GM12878 (cell line): ENCODE measurements at regions of chr3 and their contacts with region 1.

Region 1: DNA sequence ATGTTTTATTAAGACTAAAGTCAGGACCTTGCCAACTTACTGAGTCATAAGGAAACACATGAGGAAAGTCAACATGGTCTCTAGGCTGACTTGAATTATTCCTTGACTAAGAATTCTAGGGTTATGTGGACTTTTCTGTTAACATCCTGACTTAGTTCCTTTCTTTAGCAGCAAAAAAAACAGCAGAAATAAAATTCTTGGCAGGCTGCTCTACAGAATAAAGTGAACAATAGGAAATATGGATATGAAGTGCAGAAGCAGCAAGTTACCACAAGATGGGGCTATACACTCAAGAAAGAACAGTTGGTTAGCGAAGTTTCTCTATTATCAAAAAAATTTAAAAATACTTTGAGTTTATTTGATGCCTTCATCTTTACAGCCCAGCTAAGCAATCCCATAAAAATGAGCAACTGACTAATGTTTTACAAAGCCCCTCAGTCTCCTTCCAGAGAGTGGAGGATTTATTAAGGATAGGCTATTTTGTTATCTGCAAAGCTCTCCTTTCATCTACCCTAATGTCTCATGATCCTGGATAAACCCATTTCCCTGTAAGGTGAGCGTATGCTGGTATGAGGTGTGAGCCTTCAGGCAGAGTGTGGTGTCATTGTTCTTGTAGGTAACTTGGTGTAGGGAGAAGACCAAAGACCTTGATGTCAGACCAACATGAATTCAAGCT is 23.1 kb upstream of the MCCC1 start:
- DNase-seq: no peak
- ATAC-seq: peak; percentile 68
- H3K4me3 ChIP-seq: no peak overlapping the region
- H3K27ac ChIP-seq: no peak overlapping the region
- H3K4me1 ChIP-seq: no peaks in the 10 kb centered on the region
- H3K27me3 ChIP-seq: no peaks in the 10 kb centered on the region
- CTCF ChIP-seq: peak; percentile 61 to 75 (median 73)
- EP300 ChIP-seq: no peak
- POLR2A ChIP-seq: no peak
- RAD21 ChIP-seq: peak; percentile 93

Region 2: DNA sequence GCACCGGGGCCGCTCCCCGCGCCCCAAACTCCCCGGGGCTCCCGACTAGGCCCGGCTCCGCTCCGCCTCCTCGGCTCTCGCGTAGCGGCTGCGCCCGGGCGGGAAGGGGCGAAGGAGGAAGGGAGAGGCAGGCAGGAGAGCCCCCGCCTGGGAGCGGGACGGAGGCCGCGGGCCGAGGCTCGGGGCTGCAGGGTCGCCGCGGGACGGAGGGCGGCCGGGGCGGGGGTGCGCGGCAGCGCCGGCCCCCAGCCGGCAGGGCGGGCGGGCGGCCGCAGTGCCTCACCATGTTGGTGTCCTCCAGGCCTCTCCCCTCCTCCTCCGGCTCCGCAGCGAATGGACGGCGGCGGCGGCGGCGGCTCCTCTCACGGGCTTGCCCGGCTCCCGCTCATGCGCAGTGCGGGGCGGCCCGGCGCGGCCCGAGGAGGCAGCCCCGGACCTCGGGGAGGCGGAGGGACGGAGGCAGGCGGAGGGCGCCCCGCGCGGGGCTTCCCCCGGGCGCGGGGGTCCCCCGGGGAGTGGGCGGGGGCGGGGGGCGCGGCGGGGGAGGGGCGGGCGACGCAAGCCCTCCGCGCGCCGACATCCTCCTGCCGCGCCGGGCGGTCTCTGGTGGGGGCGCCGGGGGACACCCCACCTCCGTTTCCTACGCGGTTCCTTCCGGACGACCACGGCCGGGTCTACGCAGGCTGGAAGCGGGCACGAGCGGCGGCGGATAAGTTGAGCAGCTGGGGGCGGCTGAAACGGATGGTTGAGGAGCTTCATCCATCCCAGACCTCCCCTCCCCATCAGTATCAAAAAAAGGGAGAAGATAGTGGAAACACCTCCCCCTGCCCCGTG is 142.0 kb before region 1 on chr3 and contains the start of gene DCUN1D1:
- CTCF ChIA-PET with region 1: no interaction called
- POLR2A ChIA-PET with region 1: no interaction called
- RAD21 ChIA-PET with region 1: no interaction called
- SMC1A ChIA-PET with region 1: no interaction called
- in situ Hi-C with region 1: no loop called
- intact Hi-C with region 1: no loop called
- DNase-seq: peak; percentile 19
- ATAC-seq: peak; percentile 91
- H3K4me3 ChIP-seq: peak within 1 kb of the TSS; percentile 85
- H3K27ac ChIP-seq: peak within 1 kb of the TSS; percentile 53
- H3K4me1 ChIP-seq: peaks cover 9% of the 10 kb centered on the region
- H3K27me3 ChIP-seq: no peaks in the 10 kb centered on the region
- CTCF ChIP-seq: no peak
- EP300 ChIP-seq: no peak
- POLR2A ChIP-seq: peak; percentile 84
- RAD21 ChIP-seq: no peak
- polyA plus RNA-seq, gene DCUN1D1: 19.8 to 47.4 TPM

Region 3: DNA sequence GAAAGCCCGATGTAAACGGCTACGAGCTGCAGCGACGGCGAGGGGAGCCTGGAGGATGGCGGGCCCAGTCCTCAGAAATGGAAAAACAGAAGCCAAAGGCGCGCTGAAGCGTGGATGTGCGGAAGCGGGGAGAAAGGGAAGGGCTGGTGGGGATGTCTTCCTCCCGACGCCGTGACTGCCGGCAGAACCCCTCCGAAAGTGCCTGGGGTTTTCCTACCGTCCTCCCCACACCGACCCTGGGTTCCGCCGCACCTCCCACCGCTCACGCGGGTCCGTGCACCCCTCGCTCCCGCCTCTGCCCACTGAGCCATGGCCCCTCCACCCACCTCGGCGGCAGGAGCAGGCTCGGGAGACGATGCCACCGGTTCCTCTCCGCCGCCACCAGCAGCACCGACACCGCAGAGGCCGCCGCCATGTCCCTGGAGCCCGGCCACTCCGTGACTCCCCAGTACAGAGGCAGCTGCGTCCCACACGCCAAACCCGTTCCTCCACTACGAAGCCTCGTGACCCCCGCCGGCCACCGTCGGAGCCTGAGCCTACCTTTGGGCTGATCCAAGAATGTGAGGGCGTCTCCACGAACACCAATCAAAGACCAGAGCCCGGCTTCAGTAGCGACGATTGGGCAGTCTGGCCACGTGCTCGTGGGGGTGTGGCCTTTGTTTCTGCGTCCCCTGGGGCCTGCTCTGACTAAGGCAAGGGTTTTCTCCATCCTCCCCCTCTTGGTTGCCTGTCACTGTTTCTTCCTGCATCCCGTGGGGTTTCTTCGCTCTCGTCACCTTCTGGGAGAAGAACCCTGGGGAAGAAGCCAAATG is 23.2 kb before region 1 on chr3 and contains the start of gene MCCC1:
- CTCF ChIA-PET with region 1: interaction called, 6 read pairs
- POLR2A ChIA-PET with region 1: no interaction called
- RAD21 ChIA-PET with region 1: interaction called, 9 read pairs
- SMC1A ChIA-PET with region 1: interaction called, 10 read pairs
- in situ Hi-C with region 1: no loop called
- intact Hi-C with region 1: no loop called
- DNase-seq: peak; percentile 94
- ATAC-seq: peak; percentile 98
- H3K4me3 ChIP-seq: peak within 1 kb of the TSS; percentile 93
- H3K27ac ChIP-seq: peak within 1 kb of the TSS; percentile 92
- H3K4me1 ChIP-seq: peaks cover 4% of the 10 kb centered on the region
- H3K27me3 ChIP-seq: no peaks in the 10 kb centered on the region
- CTCF ChIP-seq: no peak; a peak in 1 of 6 replicates
- EP300 ChIP-seq: peak in 1 of 2 experiments; percentile 44; a peak in 1 of 4 replicates
- POLR2A ChIP-seq: peak; percentile 94
- RAD21 ChIP-seq: no peak
- polyA plus RNA-seq, gene MCCC1: 35.0 to 38.7 TPM

Region 4: DNA sequence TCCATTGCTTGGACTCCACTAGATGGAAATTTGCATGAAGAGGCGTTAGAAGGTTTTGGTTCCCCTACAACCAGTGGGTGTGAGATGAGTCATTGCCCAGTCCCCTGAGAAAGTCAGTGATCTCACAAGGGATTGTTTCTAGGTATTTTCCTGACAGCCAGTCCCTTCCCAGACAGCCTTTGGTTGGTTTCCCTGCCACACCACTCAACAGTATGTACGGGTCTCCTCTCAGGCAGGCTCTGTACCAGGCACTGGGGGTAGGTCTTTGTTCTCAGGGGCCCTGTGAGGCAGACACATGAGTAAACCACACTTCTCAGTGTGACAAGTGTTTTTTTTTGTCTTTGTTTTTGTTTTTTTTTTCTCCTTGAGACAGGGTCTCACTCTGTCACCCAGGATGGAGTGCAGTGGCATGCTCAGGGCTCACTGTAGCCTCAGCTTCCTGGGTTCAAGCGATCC is 36.2 kb after region 1 on chr3:
- CTCF ChIA-PET with region 1: interaction called, 35 read pairs
- POLR2A ChIA-PET with region 1: no interaction called
- RAD21 ChIA-PET with region 1: interaction called, 30 read pairs
- SMC1A ChIA-PET with region 1: interaction called, 16 read pairs
- in situ Hi-C with region 1: no loop called
- intact Hi-C with region 1: loop called (anchors 1 kb)
- DNase-seq: peak; percentile 97
- ATAC-seq: peak; percentile 71
- H3K4me3 ChIP-seq: peak overlapping the region; percentile 84
- H3K27ac ChIP-seq: peak overlapping the region; percentile 91
- H3K4me1 ChIP-seq: peaks cover 43% of the 10 kb centered on the region
- H3K27me3 ChIP-seq: no peaks in the 10 kb centered on the region
- CTCF ChIP-seq: no peak
- EP300 ChIP-seq: peak; percentile 90 to 91
- POLR2A ChIP-seq: no peak; the same call in 1 of the 2 replicates
- RAD21 ChIP-seq: no peak

Region 5: GRCh38 chr3:183285828-183286457 is 163.5 kb after region 1 on chr3:
- CTCF ChIA-PET with region 1: interaction called, 11 read pairs
- POLR2A ChIA-PET with region 1: no interaction called
- RAD21 ChIA-PET with region 1: interaction called, 3 read pairs
- SMC1A ChIA-PET with region 1: no interaction called
- in situ Hi-C with region 1: no loop called
- intact Hi-C with region 1: no loop called
- DNase-seq: peak; percentile 81
- ATAC-seq: peak; percentile 95
- H3K4me3 ChIP-seq: no peak overlapping the region
- H3K27ac ChIP-seq: peak overlapping the region; percentile 2; the same call in 1 of the 2 replicates
- H3K4me1 ChIP-seq: peaks cover 5% of the 10 kb centered on the region
- H3K27me3 ChIP-seq: no peaks in the 10 kb centered on the region
- CTCF ChIP-seq: no peak
- EP300 ChIP-seq: peak; percentile 66 to 76; a peak in 3 of 4 replicates
- POLR2A ChIP-seq: no peak
- RAD21 ChIP-seq: no peak

Region 6: DNA sequence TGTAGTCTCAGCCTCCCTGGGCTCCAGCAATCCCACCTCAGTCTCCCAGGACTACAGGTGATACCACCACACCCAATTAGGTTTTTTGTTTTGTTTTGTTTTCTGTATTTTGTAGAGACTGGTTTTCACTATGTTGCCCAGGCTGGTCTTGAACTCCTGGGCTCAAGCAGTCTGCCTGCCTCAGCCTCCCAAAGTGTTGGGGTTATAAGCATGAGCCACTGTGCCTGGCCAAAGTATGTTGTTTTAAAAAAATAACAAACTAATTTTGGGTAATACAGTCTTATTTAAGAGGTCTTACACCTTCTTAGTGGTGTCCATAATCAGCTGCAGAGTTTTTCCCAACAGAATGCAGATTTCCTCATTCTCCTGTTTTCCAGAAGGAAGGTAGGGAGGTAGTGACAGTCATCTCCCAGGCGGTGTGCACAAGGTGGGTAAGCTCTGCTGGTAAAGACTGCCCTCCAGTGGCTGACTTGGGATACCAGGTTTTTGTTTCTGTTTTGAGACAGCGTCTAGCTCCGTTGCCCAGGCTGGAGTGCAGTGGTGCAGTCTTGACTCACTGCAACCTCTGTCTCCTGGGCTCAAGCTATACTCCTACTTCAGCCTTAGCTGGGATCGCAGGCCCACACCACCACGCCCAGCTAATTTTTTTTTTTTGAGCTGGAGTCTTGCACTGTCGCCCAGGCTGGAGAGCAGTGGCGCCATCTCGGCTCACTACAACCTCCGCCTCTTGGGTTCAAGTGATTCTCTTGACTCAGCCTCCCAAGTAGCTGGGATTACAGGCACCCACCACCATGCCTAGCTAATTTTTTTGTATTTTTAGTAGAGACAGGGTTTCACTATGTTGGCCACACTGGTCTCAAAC is 644.6 kb after region 1 on chr3:
- CTCF ChIA-PET with region 1: no interaction called
- POLR2A ChIA-PET with region 1: no interaction called
- RAD21 ChIA-PET with region 1: no interaction called
- SMC1A ChIA-PET with region 1: no interaction called
- in situ Hi-C with region 1: no loop called
- intact Hi-C with region 1: loop called (anchors 10 kb)
- DNase-seq: no peak
- ATAC-seq: peak; percentile 99
- H3K4me3 ChIP-seq: no peak overlapping the region
- H3K27ac ChIP-seq: no peak overlapping the region
- H3K4me1 ChIP-seq: no peaks in the 10 kb centered on the region
- H3K27me3 ChIP-seq: no peaks in the 10 kb centered on the region
- CTCF ChIP-seq: peak; percentile 67 to 82 (median 79)
- EP300 ChIP-seq: no peak
- POLR2A ChIP-seq: no peak
- RAD21 ChIP-seq: peak; percentile 89